Aorta (tissue), 5 donors: ENCODE measurements at regions of chr1 and their contacts with region 1.

Region 1: DNA sequence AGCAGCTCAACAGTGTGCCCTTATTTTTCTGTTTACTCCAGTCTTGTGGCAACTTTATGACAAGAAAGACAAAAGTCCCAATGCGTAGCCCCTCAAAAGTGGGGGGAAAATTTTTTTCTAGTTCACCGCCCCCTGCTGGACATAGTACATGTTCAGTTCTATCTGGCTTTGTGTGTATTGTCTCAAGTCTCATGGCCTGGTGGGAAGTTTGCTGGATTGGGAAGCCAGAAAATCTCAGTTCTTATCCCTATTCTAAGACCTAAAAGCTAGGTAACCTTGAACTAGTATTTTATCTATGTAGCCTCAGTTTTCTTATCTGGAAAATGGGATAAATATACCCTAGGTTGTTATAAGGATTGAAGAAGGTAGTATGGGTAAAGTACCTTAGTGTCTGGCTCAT is 55.8 kb upstream of the LDLRAP1 start:
- DNase-seq: no peak
- ATAC-seq: no peak
- H3K4me3 ChIP-seq: no peak overlapping the region
- H3K27ac ChIP-seq: no peak overlapping the region
- H3K4me1 ChIP-seq: no peaks in the 10 kb centered on the region
- H3K27me3 ChIP-seq: no peaks in the 10 kb centered on the region

Region 2: GRCh38 chr1:25543425-25544242 is 56.0 kb after region 1 on chr1 and contains the start of gene LDLRAP1:
- intact Hi-C with region 1: loop called in 1 of 2 experiments (anchors 10 kb)
- DNase-seq: peak; percentile 82 to 93
- ATAC-seq: peak; percentile 95
- H3K4me3 ChIP-seq: peak within 1 kb of the TSS; percentile 58 to 93
- H3K27ac ChIP-seq: peak within 1 kb of the TSS; percentile 19 to 90
- H3K4me1 ChIP-seq: no peaks in the 10 kb centered on the region
- H3K27me3 ChIP-seq: no peaks in the 10 kb centered on the region
- total RNA-seq, gene LDLRAP1: 25.6 to 34.7 TPM

Region 3: DNA sequence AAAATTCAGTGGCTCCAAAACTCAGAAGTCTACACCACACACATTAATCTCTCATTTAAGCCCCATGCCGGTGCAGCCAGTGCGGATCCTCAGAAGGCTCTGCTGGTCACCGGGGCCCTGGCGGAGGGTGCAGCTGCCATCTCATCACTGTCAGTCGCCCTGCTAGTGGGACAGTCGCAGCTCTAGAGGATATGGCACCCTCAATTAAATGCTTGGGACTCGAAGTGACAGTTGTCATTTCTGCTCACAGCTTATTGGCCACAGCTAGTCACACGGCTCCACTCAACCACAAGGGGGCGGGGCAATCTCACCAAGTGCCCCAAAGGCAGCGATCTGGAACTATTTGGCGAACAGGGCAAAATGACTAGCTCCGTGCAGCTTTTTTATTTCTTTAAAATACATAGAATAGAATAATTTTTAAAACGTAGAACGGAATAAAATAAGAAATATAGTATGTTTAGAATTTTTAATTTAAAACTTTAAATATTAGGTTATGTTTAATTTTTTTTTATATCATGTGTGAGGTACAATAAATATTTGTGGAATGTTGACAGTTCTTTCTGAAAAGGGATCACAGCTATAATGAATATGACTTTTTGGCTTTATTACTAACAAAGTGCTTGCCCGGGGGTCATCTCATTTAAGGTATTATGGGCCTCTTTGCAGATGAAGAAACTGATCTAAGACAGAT is 121.0 kb after region 1 on chr1:
- intact Hi-C with region 1: no loop called
- DNase-seq: peak; percentile 92 to 94
- ATAC-seq: peak; percentile 84
- H3K4me3 ChIP-seq: no peak overlapping the region
- H3K27ac ChIP-seq: no peak overlapping the region
- H3K4me1 ChIP-seq: no peaks in the 10 kb centered on the region
- H3K27me3 ChIP-seq: no peaks in the 10 kb centered on the region